ENCODE measurements at regions of chr2 and their contacts with region 1.

Region 1: DNA sequence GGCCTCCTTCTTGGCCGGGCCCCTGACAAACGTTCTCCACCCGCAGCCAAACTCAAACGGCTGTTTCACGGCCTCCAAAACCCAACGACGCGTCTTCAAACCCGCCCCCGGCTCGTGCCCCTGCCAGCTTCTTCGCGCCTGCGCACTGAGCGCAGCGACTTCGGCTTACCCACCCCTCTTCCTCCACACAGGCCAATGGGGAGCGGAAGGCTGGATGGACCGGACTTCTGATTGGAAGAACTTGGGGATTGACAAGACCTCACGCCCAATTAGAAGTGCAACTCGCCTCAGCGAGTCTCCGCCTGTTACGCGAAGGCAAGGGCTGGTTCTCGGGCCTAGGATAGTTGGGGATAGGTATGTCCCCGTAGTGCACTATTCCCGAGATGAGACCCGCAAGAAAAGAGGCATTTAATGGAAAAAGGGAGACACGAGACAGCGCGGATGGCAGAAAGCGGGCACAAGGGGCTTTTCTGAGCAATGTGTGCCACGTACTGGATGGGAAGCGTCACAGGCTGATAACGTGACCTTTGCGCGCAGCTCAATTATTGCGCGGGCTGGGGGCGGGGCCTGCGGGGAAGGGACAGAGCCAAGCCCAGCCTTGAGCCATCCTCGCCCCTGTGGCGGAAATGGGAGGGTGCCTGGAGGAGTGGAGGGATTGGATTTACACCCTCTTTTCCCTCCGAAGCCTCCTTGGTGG is at the start of gene LAPTM4A:
- DNase-seq: peak; percentile 97 to 99 (median 98)
- ATAC-seq: peak; percentile 95
- H3K4me3 ChIP-seq: peak within 1 kb of the TSS; percentile 70
- H3K27ac ChIP-seq: peak within 1 kb of the TSS; percentile 98
- H3K4me1 ChIP-seq: peaks cover 0 to 23% of the 10 kb centered on the region in 2 experiments; a peak in 3 of 5 replicates
- H3K27me3 ChIP-seq: no peaks in the 10 kb centered on the region
- CTCF ChIP-seq: 0 out of 6 replicates have a peak, but pooled peaks of 1 of the 3 experiments have one; percentile 3
- EP300 ChIP-seq: peak; percentile 34; the same call in 1 of the 2 replicates
- POLR2A ChIP-seq: peak; percentile 91
- RAD21 ChIP-seq: no peak
- polyA plus RNA-seq, gene LAPTM4A: 141 to 157 TPM

Region 2: GRCh38 chr2:19559596-19560240 is 492.0 kb before region 1 on chr2:
- CTCF ChIA-PET with region 1: no interaction called
- POLR2A ChIA-PET with region 1: no interaction called
- in situ Hi-C with region 1: no loop called
- intact Hi-C with region 1: no loop called
- DNase-seq: no peak
- ATAC-seq: no peak
- H3K4me3 ChIP-seq: no peak overlapping the region
- H3K27ac ChIP-seq: no peak overlapping the region
- H3K4me1 ChIP-seq: no peaks in the 10 kb centered on the region
- H3K27me3 ChIP-seq: no peaks in the 10 kb centered on the region; a peak in 1 of 5 replicates
- CTCF ChIP-seq: no peak
- EP300 ChIP-seq: no peak
- POLR2A ChIP-seq: no peak
- RAD21 ChIP-seq: no peak

Region 3: DNA sequence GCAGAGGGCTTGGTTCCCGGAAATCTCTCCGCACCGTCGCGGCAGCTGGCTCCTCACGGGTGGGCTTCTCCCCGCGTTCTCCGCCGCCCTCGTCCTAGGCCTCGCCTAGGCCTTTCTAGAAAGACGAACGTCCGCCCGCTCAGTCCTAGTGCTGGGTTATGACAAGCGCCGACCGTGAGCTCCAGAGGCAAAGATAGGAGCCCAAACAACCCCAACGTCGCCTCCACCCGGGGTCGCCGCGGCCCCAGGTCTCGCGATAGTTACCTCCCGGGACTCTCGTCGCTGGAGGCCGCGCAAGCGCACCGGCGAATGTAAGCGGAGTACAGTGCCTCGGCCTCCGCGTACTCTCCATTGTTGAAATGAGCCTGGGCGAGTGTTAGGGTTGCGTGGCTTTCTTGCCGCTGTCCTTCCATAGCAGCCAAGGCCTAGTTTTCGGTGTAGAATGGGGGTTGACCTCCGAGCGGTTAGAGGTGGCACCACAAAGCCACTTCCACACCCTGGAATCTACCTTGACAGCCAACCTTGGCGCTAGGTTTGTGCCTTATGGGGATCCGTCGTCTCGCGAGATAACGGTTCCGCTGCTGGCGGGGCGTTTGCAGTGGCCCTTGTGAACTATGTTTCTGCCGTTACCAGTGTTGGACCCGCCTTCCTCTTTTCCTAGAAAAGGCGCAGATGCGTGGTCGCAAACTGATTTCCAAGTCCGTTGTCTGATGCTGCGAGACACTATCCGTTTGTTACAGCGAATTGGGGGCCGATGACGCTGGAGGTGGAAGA is 150.1 kb before region 1 on chr2 and contains the start of gene TTC32:
- CTCF ChIA-PET with region 1: no interaction called
- POLR2A ChIA-PET with region 1: no interaction called
- in situ Hi-C with region 1: no loop called
- intact Hi-C with region 1: loop called (anchors 5 kb)
- DNase-seq: peak; percentile 96 to 97 (median 96)
- ATAC-seq: peak; percentile 77
- H3K4me3 ChIP-seq: peak within 1 kb of the TSS; percentile 68
- H3K27ac ChIP-seq: peak within 1 kb of the TSS; percentile 99
- H3K4me1 ChIP-seq: peaks cover 10 to 12% of the 10 kb centered on the region in 2 experiments; a peak in 4 of 5 replicates
- H3K27me3 ChIP-seq: no peaks in the 10 kb centered on the region
- CTCF ChIP-seq: peak in 2 of 3 experiments; percentile 13 to 28; a peak in 2 of 6 replicates
- EP300 ChIP-seq: peak; percentile 91
- POLR2A ChIP-seq: peak; percentile 96
- RAD21 ChIP-seq: no peak
- polyA plus RNA-seq, gene TTC32: 55.0 to 66.5 TPM

Region 4: DNA sequence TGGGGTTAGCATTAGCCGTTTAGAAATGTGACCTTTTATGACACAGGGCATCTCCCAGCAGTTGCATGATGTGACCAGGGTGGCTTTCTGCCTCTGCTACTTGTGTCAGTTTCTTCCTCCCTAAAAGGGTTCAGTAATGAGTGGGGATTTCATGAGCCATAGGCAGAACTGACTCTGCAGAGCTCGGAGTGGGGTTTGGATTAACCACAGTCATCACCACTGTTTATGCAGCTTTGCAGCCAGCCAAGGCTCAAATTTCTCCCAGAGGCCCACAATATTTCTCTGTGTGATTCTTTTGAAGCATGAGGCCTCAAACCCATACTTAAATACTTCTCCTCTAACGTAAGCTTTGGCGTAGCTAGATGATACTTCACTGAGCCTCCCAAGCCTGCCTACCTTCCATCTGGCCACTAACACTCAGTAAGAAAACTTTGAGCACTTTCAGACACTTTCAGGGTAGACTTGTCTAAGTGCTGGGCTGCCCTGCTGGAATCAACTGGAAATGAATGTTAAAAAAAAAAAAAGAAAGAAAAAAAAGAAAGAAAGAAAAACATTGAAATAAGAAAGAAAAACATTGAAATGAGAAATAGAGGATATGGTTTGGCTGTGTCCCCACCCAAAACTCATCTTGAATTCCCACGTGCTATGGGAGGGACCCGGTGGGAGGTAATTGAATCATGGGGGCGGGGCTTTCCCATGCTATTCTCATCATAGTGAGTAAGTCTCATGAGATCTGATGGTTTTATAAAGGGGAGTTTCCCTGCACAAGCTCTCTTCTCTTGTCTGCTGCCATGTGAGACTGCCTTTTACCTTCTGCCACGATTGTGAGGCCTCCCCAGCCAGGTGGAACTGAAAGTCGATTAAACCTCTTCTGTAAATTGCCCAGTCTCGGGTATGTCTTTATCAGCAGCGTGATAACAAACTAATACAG is 11.2 kb after region 1 on chr2:
- CTCF ChIA-PET with region 1: no interaction called
- POLR2A ChIA-PET with region 1: interaction called, 13 read pairs
- in situ Hi-C with region 1: no loop called
- intact Hi-C with region 1: no loop called
- DNase-seq: no peak
- ATAC-seq: no peak; the same call in 2 of the 3 replicates
- H3K4me3 ChIP-seq: no peak overlapping the region
- H3K27ac ChIP-seq: no peak overlapping the region
- H3K4me1 ChIP-seq: peaks cover 0 to 3% of the 10 kb centered on the region in 2 experiments; a peak in 1 of 5 replicates
- H3K27me3 ChIP-seq: no peaks in the 10 kb centered on the region
- CTCF ChIP-seq: no peak
- EP300 ChIP-seq: no peak
- POLR2A ChIP-seq: no peak
- RAD21 ChIP-seq: no peak

Region 5: DNA sequence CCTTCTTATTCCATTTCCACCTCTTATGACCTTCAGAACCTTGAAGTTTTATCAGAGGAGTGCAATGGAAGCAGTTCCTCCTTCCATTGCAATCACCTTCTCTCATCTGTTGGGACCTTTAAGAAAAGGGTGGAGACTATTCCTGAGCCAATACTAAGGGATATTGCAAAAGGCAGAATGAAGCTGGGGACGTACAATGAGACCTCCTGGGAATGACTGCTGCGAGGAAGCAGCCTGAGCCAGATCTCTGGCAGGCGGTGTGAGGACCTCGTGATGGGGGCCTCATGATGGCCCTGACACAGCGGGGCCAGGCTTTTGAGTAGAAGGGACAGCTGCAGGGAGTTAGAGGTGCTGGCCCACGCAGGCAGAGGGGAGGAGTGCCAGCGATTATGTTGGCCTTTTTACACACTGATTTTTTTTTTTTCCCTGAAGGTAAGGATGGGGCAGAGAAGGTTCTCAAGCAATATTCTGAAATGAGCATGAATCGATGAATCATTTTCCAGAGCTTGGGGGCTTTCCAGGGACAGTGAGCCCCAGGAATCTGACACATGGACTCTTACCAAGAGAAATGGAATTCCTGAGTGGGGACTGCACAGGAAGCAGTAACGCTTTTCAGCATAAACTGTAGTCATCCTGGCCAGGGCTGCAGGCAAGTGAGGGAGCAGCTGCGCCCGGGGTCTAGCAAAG is 39.8 kb after region 1 on chr2:
- CTCF ChIA-PET with region 1: interaction called, 3 read pairs
- POLR2A ChIA-PET with region 1: no interaction called
- in situ Hi-C with region 1: no loop called
- intact Hi-C with region 1: loop called (anchors 1 kb)
- DNase-seq: peak in 2 of 4 experiments; percentile 46 to 57
- ATAC-seq: peak; percentile 78
- H3K4me3 ChIP-seq: no peak overlapping the region
- H3K27ac ChIP-seq: peak overlapping the region; percentile 18; the same call in 1 of the 3 replicates
- H3K4me1 ChIP-seq: peaks cover 15 to 25% of the 10 kb centered on the region in 2 experiments
- H3K27me3 ChIP-seq: no peaks in the 10 kb centered on the region
- CTCF ChIP-seq: no peak
- EP300 ChIP-seq: peak; percentile 83
- POLR2A ChIP-seq: no peak
- RAD21 ChIP-seq: peak in 1 of 2 experiments; percentile 14; a peak in 1 of 4 replicates

Region 6: GRCh38 chr2:20157193-20157891 is 105.7 kb after region 1 on chr2:
- CTCF ChIA-PET with region 1: no interaction called
- POLR2A ChIA-PET with region 1: no interaction called
- in situ Hi-C with region 1: no loop called
- intact Hi-C with region 1: no loop called
- DNase-seq: no peak
- ATAC-seq: no peak
- H3K4me3 ChIP-seq: no peak overlapping the region
- H3K27ac ChIP-seq: no peak overlapping the region
- H3K4me1 ChIP-seq: no peaks in the 10 kb centered on the region; a peak in 1 of 5 replicates
- H3K27me3 ChIP-seq: peaks cover 8 to 12% of the 10 kb centered on the region in 2 experiments; a peak in 3 of 5 replicates
- CTCF ChIP-seq: no peak
- EP300 ChIP-seq: no peak
- POLR2A ChIP-seq: no peak
- RAD21 ChIP-seq: no peak

Measured in K562 (cell line).